ENCODE measurements at regions of chr9 and their contacts with region 1.

Region 1: DNA sequence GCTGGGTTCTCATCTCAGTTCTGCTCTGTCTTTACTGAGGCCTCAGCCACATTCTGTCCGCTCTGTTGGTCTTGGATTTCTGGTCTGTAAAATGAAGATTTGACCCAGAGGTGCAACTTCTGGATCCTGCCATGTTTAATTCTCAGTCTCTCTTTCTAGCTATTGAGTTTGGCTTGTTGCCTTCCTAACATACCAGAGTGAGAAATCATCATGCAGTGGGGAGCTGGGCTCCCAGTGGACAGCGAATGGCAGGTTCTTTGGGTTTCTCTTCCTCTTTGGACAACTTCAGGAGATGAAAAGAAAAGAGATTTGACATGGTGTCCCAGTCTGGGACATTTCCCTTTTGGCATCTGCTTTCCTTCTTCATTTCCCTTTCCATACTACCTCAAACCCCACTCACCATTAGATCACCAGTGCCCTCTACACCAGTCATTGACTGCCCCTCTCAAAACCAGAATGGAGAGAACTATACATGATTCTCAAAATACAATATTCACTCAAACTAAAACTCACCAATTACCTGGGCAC is 334.7 kb downstream of the ACTL7B start:
- DNase-seq: no peak
- ATAC-seq: no peak
- H3K4me3 ChIP-seq: no peak overlapping the region
- H3K27ac ChIP-seq: no peak overlapping the region
- H3K4me1 ChIP-seq: no peaks in the 10 kb centered on the region
- H3K27me3 ChIP-seq: no peaks in the 10 kb centered on the region
- CTCF ChIP-seq: no peak
- POLR2A ChIP-seq: no peak

Region 2: DNA sequence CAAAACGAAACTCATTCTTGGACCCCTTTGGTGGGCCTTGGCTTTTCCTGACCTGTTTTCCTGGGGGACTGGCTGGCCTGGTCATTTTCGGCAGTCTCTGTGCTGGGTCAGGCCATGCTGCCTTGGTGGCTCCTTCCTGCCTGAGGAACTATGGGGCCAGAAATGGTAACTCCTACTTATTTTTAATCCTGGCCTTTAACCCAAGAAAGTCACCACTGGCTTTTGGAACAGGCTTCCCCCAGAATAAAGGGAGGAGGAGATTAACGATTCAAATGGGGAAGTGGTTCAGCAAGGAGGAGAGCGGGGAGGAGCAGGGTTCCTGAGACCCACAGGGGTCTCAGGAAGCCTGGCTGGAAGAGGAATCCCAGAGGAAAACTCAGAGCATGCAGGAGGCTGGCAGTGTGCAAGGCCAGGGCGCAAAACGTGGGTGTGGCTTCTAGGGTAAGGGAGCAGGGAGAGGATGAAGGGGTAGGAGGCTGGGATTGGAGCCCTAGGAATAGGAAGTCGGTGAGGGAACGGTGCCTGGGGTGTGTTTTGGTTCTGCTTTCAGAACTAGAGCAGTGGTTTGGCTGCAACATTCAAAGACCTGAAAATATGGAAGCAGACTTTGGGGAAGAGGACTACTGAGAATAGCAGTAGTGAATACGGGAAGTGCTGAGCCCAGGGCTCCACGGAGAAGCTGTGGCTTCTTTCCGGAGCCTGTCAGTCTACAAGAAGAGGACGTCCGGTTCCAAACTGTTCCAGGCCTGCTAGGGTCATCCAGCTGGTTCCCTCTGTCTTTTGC is 760.5 kb before region 1 on chr9:
- intact Hi-C with region 1: loop called in 1 of 2 experiments (anchors 10 kb)
- DNase-seq: peak in 1 of 3 donors; percentile 65
- ATAC-seq: peak; percentile 83 to 93 (median 92)
- H3K4me3 ChIP-seq: no peak overlapping the region
- H3K27ac ChIP-seq: peak overlapping the region in 1 of 3 donors; percentile 4
- H3K4me1 ChIP-seq: no peaks in the 10 kb centered on the region
- H3K27me3 ChIP-seq: no peaks in the 10 kb centered on the region
- CTCF ChIP-seq: no peak
- POLR2A ChIP-seq: no peak

Region 3: DNA sequence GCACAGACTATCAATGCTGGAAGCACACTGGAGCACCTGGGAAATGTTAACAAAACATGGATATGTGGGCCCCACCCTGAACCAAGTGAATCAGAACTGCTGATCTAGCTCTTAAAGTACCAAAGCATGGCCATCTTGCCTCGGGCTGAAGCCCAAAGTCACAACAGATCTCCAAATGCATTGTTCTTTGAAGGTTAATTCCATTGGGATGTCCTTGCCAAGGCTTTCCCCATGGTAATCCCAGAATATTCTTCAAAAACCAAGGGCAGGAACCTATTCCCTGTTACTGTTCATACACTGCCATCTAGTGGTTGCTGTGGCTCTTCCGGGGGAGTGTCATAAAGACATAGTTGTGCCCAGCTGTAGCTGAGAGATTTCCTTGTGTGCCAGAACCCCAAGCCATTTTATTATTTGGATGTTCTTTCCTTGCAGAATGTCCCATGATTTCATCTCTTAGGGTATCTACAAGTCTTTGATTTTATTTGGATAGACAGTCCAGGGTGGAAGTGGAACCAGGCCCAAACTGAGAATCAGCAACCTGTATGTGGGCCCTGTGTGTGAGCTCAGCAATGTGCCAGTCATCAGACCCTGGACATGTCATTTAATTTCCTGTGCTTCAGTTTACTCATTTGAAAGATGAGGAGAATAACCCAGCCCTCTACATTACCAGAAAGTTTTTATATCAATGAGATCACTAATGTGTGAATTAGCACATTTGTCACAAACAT is 44.7 kb after region 1 on chr9:
- intact Hi-C with region 1: no loop called
- DNase-seq: peak in 1 of 3 donors; percentile 53
- ATAC-seq: peak; percentile 86 to 97 (median 92)
- H3K4me3 ChIP-seq: no peak overlapping the region
- H3K27ac ChIP-seq: no peak overlapping the region
- H3K4me1 ChIP-seq: peaks cover 0 to 9% (median 4%) of the 10 kb centered on the region in 4 donors
- H3K27me3 ChIP-seq: no peaks in the 10 kb centered on the region
- CTCF ChIP-seq: peak; percentile 85 to 92 (median 86)
- POLR2A ChIP-seq: no peak